T-cell (primary cell): ENCODE measurements at regions of chr20 and their contacts with region 1.

Region 1: GRCh38 chr20:23869520-23869919 is 10.0 kb downstream of the CST5 start:
- DNase-seq: no peak
- ATAC-seq: no peak
- H3K4me3 ChIP-seq: no peak overlapping the region
- H3K4me3 Mint-ChIP-seq: no peak overlapping the region
- H3K27ac ChIP-seq: no peak overlapping the region
- H3K27ac Mint-ChIP-seq: no peak overlapping the region
- H3K4me1 ChIP-seq: peaks cover 5 to 10% of the 10 kb centered on the region in 2 experiments
- H3K4me1 Mint-ChIP-seq: peaks cover 0 to 23% (median 0%) of the 10 kb centered on the region in 3 donors
- H3K27me3 ChIP-seq: peaks cover 0 to 9% of the 10 kb centered on the region in 2 experiments
- H3K27me3 Mint-ChIP-seq: peaks cover 0 to 40% of the 10 kb centered on the region in 2 donors

Region 2: GRCh38 chr20:23613676-23614075 is 255.8 kb before region 1 on chr20:
- CTCF ChIA-PET with region 1: no interaction called
- POLR2A ChIA-PET with region 1: no interaction called
- DNase-seq: no peak
- ATAC-seq: no peak
- H3K4me3 ChIP-seq: no peak overlapping the region
- H3K4me3 Mint-ChIP-seq: no peak overlapping the region
- H3K27ac ChIP-seq: no peak overlapping the region
- H3K27ac Mint-ChIP-seq: no peak overlapping the region
- H3K4me1 ChIP-seq: no peaks in the 10 kb centered on the region
- H3K4me1 Mint-ChIP-seq: no peaks in the 10 kb centered on the region
- H3K27me3 ChIP-seq: no peaks in the 10 kb centered on the region
- H3K27me3 Mint-ChIP-seq: peaks cover 6 to 7% of the 10 kb centered on the region in 2 donors

Region 3: DNA sequence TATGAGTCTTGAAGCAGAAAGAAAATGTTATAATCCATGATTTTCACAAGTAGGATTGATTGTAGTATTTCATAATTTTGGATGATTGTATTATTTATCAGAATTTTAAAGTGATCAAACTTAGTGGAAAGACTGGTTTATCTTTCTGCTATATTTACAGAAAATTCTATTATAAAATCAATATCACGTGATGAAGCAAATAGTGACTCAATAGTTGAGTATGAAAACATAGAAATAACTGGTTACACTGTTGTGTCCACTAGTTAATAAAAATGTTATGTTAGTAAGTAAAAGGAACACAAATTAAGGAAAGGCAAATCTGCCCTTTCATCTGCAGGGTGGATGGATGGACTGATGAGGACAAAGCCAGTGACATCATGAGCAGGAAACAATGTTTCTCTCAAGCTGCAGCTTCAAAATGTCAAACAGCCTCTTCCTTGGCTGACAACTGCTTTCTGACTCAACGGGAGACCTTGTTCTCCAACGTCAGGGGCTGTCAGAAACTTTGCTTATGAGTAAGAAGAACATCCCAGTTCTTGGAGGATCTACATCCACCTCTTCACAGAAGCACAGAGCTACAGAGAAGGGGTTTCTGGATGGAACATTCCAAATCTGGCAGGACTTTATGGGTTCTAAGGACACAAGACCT is 49.2 kb before region 1 on chr20:
- CTCF ChIA-PET with region 1: no interaction called
- POLR2A ChIA-PET with region 1: no interaction called
- DNase-seq: no peak
- ATAC-seq: no peak
- H3K4me3 ChIP-seq: no peak overlapping the region
- H3K4me3 Mint-ChIP-seq: no peak overlapping the region
- H3K27ac ChIP-seq: no peak overlapping the region
- H3K27ac Mint-ChIP-seq: no peak overlapping the region
- H3K4me1 ChIP-seq: no peaks in the 10 kb centered on the region
- H3K4me1 Mint-ChIP-seq: no peaks in the 10 kb centered on the region
- H3K27me3 ChIP-seq: peaks cover 0 to under 1% of the 10 kb centered on the region in 2 experiments
- H3K27me3 Mint-ChIP-seq: peaks cover 4 to 5% of the 10 kb centered on the region in 2 donors

Region 4: DNA sequence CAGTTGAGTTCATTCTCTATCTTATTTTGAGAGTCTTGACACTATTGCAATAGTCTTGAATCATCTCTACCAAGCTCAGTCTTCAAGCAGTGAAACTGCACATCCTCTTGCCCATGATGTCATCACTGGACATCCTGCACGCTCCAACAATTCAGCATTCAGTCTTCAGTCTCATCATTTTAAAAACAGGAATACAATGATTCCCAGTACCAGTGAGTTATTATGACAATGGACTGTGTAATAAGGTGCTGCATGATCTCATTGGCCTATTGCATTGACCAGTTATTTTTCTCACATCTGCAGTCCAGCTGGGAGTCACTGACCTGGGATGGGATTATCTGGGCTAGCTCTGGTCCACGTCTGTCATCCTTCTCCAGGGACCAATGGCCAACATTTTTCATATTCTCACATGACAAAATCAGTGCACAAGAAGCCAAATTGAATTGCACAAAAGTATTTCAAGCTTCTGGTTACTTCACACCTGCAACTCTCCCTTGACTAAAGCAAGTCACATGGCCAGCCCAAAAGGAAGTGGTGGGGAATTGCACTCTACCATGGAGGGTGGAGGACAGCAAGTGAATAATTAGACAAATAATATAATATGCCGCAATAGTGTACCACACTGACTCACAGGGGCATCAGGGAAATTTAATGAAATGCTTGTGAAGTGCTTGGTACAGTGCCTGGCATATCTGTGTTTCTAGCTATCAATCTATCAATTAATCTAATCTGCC is 36.6 kb before region 1 on chr20:
- CTCF ChIA-PET with region 1: no interaction called
- POLR2A ChIA-PET with region 1: interaction called in 1 of 2 experiments, 11 read pairs
- DNase-seq: no peak
- ATAC-seq: no peak
- H3K4me3 ChIP-seq: no peak overlapping the region
- H3K4me3 Mint-ChIP-seq: no peak overlapping the region
- H3K27ac ChIP-seq: no peak overlapping the region
- H3K27ac Mint-ChIP-seq: no peak overlapping the region
- H3K4me1 ChIP-seq: no peaks in the 10 kb centered on the region
- H3K4me1 Mint-ChIP-seq: peaks cover 0 to 4% (median 0%) of the 10 kb centered on the region in 3 donors
- H3K27me3 ChIP-seq: peaks cover 0 to 19% of the 10 kb centered on the region in 2 experiments
- H3K27me3 Mint-ChIP-seq: peaks cover 4 to 23% of the 10 kb centered on the region in 2 donors